Activated naive CD4-positive, alpha-beta T cell treated with anti-CD3 and anti-CD28 coated beads, Interleukin-2, amount 10 ng/mL, durations not matched to agents 7 days and 5 days (primary cell): ENCODE measurements at regions of chr2 and their contacts with region 1.

Region 1: GRCh38 chr2:134411828-134412638 is 158.2 kb downstream of the MGAT5 start:
- DNase-seq: peak; percentile 84
- H3K4me3 Mint-ChIP-seq: no peak overlapping the region
- H3K27ac Mint-ChIP-seq: no peak overlapping the region
- H3K4me1 Mint-ChIP-seq: peaks cover 33% of the 10 kb centered on the region
- H3K27me3 Mint-ChIP-seq: no peaks in the 10 kb centered on the region

Region 2: DNA sequence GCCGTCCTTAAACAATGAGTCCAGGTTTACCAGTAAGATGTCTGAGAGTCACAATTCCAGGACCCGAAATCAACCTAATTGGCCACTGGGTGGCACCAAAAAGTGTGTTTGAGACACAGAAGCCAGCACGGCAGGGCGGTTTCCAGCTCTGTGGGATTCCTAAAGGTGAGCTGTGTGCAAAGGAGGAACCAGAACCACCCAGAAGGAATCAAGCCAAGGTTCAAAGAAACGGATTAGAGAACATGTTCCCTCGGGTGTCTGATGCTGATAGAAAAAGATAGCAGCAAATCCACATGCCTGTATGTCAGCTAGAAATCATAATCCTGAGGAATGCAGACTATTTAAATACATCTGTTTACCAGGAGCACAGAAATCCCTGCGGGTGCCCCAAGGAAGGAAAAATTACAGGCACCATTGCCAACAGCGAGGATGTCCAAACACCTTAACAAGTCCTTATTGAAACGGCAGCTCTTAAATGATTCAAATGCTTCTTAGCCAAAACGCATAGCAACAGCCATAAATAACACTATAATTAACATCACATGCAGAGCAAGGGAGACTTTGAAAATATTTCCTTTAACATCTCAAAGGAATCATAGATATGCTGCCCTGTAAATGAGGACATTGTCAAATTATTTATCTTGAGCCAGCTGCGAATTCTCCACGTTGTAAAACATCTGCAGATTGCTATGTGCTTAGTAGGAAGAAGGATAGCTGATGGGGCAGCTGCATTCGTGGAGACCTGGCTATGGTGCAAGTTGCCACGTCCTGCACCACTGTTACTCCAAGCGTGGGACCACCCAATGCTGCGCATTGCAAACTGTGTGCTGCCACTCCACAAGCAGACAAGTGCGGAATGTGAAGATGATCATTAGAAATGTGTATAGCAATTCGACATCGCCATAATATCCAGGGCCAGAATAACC is 525.0 kb before region 1 on chr2:
- CTCF ChIA-PET with region 1: interaction called, 62 read pairs
- DNase-seq: peak; percentile 64
- H3K4me3 Mint-ChIP-seq: no peak overlapping the region
- H3K27ac Mint-ChIP-seq: no peak overlapping the region
- H3K4me1 Mint-ChIP-seq: no peaks in the 10 kb centered on the region
- H3K27me3 Mint-ChIP-seq: peaks cover 34% of the 10 kb centered on the region

Region 3: GRCh38 chr2:134207564-134208209 is 204.3 kb before region 1 on chr2:
- CTCF ChIA-PET with region 1: interaction called, 10 read pairs
- DNase-seq: peak; percentile 75
- H3K4me3 Mint-ChIP-seq: no peak overlapping the region
- H3K27ac Mint-ChIP-seq: no peak overlapping the region
- H3K4me1 Mint-ChIP-seq: peaks cover 8% of the 10 kb centered on the region
- H3K27me3 Mint-ChIP-seq: no peaks in the 10 kb centered on the region

Region 4: GRCh38 chr2:134290358-134290757 is 121.7 kb before region 1 on chr2:
- CTCF ChIA-PET with region 1: interaction called, 12 read pairs
- DNase-seq: peak; percentile 25
- H3K4me3 Mint-ChIP-seq: no peak overlapping the region
- H3K27ac Mint-ChIP-seq: no peak overlapping the region
- H3K4me1 Mint-ChIP-seq: peaks cover 37% of the 10 kb centered on the region
- H3K27me3 Mint-ChIP-seq: no peaks in the 10 kb centered on the region

Region 5: DNA sequence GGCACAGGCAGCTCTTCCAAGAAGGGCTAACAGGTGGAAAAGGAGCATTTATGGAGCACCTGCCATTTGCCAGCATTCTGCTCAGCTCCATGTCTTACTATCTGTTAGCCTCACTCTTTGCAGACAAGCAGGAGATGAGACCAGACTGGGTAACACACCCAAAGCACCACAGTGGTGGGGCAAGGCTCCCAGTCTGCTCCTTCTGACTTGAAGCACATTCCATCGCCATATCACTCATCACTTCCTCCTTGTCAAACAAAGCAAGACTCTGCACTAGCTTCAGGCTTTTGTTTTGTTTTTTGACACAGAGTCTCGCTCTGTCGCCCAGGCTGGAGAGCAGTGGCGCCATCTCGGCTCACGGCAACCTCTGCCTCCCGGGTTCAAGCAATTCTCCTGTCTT is 24.7 kb after region 1 on chr2:
- CTCF ChIA-PET with region 1: interaction called, 11 read pairs
- DNase-seq: no peak
- H3K4me3 Mint-ChIP-seq: no peak overlapping the region
- H3K27ac Mint-ChIP-seq: no peak overlapping the region
- H3K4me1 Mint-ChIP-seq: no peaks in the 10 kb centered on the region
- H3K27me3 Mint-ChIP-seq: no peaks in the 10 kb centered on the region